OCI-LY7 (cell line): ENCODE measurements at regions of chr9 and their contacts with region 1.

Region 1: GRCh38 chr9:21334701-21335632 is at the start of gene KLHL9:
- DNase-seq: peak; percentile 92
- H3K4me3 ChIP-seq: peak within 1 kb of the TSS; percentile 83
- H3K27ac ChIP-seq: peak within 1 kb of the TSS; percentile 62
- H3K4me1 ChIP-seq: peaks cover 45% of the 10 kb centered on the region
- CTCF ChIP-seq: no peak
- total RNA-seq, gene KLHL9: 19.3 and 19.9 TPM in 2 replicates

Region 2: GRCh38 chr9:20684035-20684872 is 650.7 kb before region 1 on chr9 and contains the start of gene FOCAD:
- CTCF ChIA-PET with region 1: no interaction called
- POLR2A ChIA-PET with region 1: no interaction called
- intact Hi-C with region 1: loop called (anchors 5 kb)
- DNase-seq: peak; percentile 95
- H3K4me3 ChIP-seq: peak within 1 kb of the TSS; percentile 83
- H3K27ac ChIP-seq: peak within 1 kb of the TSS; percentile 29
- H3K4me1 ChIP-seq: peaks cover 16% of the 10 kb centered on the region
- CTCF ChIP-seq: no peak
- total RNA-seq, gene FOCAD: 12.4 and 13.8 TPM in 2 replicates

Region 3: GRCh38 chr9:21481470-21482056 is 146.6 kb after region 1 on chr9:
- CTCF ChIA-PET with region 1: no interaction called
- POLR2A ChIA-PET with region 1: no interaction called
- intact Hi-C with region 1: no loop called
- DNase-seq: peak; percentile 1
- H3K4me3 ChIP-seq: no peak overlapping the region
- H3K27ac ChIP-seq: no peak overlapping the region
- H3K4me1 ChIP-seq: no peaks in the 10 kb centered on the region
- CTCF ChIP-seq: no peak

Region 4: DNA sequence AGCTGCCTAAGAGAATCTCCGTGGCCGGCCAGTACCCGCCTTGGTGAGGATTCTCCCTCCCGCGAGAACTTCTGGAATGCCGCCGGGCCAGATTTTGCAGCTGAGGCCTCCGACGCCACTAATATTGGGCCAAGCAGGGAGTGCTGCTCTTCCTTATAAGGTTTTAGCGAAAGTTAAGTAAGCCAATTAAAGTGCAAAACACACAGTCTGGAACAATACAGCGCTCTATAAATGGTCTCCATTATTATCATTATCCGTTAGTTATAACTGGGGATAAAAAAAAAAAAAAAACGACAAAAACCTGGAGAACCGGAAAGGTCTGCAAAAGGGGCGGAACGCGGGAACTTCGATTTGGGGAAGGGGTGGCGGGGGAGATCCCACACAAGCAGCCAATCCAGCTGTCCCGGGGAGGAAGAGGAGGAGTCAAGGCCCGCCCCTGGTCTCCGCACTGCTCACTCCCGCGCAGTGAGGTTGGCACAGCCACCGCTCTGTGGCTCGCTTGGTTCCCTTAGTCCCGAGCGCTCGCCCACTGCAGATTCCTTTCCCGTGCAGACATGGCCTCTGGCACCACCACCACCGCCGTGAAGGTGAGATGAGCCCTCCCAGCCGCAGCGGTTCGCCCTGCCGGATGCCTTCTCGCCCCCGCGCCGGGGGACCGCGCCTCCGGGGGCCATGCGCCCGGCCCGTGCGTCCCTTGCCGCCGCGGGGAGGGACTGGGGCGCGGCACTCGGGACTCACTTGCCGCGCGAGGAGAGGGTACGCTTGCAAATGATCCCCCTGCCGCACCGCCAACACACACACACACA is 467.4 kb after region 1 on chr9 and contains the start of gene MTAP:
- CTCF ChIA-PET with region 1: no interaction called
- POLR2A ChIA-PET with region 1: interaction called, 4 read pairs
- intact Hi-C with region 1: loop called (anchors 1 kb)
- DNase-seq: peak; percentile 90
- H3K4me3 ChIP-seq: peak within 1 kb of the TSS; percentile 97
- H3K27ac ChIP-seq: peak within 1 kb of the TSS; percentile 73
- H3K4me1 ChIP-seq: peaks cover 43% of the 10 kb centered on the region
- CTCF ChIP-seq: no peak
- total RNA-seq, gene MTAP: 41.6 and 50.4 TPM in 2 replicates

Region 5: DNA sequence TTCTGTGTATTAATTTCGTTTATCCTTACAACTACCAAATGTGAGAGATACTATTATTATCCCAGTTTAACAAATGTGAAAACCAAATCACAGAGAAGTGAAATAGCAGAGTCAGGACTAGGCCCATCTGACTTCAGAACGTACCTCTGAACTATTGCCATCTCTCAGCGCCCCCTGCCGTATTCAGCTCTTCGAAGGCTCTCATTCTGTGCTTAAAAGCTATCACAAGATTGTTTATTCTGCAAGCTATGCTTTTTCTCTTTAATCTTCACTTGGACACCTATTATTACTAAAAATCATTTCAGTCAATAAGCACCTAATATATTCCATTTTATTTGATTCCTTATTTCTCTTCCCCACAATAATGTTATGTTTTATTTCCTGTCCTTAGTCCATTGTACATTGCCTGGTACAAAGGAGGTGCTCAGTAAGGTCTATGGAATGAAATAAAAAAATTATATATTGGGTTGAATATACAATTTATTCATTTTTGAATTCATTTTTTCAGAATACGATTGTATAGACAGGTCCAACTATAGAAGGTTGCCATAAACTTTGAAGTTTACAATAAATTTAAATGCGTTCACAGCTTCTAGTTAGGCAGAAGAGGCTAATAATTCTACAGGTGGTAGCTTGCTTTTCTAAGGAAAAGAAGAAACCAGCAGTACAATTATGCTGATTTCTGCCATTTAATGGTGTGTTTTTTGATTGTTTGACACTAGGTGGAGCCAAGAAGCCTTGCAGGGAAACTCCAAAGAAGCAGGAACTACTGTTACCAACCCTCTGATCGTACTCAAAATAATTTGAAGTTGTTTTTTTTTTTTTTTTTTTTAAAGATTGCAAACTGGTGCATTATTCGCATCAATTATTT is 909.4 kb after region 1 on chr9:
- CTCF ChIA-PET with region 1: no interaction called
- POLR2A ChIA-PET with region 1: no interaction called
- intact Hi-C with region 1: loop called (anchors 10 kb)
- DNase-seq: peak; percentile 70
- H3K4me3 ChIP-seq: no peak overlapping the region
- H3K27ac ChIP-seq: no peak overlapping the region
- H3K4me1 ChIP-seq: peaks cover 29% of the 10 kb centered on the region
- CTCF ChIP-seq: peak; percentile 77